Psoas muscle (tissue), 8 donors: ENCODE measurements at regions of chr2 and their contacts with region 1.

Region 1: DNA sequence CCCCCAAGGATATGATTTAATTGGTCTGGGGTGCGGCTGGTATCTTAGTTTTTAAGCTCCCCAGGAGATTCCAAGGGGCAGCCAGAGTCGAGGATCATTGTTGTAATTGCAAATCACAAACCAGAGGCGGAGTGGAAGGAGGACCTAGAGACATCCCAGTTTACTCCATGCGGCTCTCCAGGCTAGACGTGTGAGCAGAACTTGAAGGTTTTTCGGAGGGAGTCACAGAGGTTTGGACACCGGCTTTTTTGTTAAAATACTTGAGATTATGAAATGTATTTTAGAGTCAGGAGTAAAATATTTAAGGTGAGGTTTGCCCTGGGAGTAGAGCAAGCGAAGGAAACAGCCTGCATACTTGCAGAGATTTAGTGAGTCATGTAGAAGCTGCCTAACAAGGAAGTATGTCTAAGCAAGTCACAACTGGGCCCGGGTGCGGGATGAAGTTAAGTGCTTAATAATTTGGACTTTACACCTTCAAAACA is 39.5 kb downstream of the TGOLN2 start:
- DNase-seq: peak in 1 of 2 donors; percentile 1
- ATAC-seq: no peak
- H3K4me3 ChIP-seq: no peak overlapping the region
- H3K27ac ChIP-seq: no peak overlapping the region
- H3K4me1 ChIP-seq: peaks cover 4% of the 10 kb centered on the region
- H3K27me3 ChIP-seq: no peaks in the 10 kb centered on the region
- CTCF ChIP-seq: no peak

Region 2: GRCh38 chr2:84925724-84926376 is 362.4 kb before region 1 on chr2:
- intact Hi-C with region 1: loop called in 1 of 2 experiments (anchors 10 kb)
- DNase-seq: peak; percentile 96
- ATAC-seq: peak; percentile 84 to 94 (median 87)
- H3K4me3 ChIP-seq: peak overlapping the region; percentile 55
- H3K27ac ChIP-seq: no peak overlapping the region
- H3K4me1 ChIP-seq: no peaks in the 10 kb centered on the region
- H3K27me3 ChIP-seq: no peaks in the 10 kb centered on the region
- CTCF ChIP-seq: peak; percentile 94

Region 3: DNA sequence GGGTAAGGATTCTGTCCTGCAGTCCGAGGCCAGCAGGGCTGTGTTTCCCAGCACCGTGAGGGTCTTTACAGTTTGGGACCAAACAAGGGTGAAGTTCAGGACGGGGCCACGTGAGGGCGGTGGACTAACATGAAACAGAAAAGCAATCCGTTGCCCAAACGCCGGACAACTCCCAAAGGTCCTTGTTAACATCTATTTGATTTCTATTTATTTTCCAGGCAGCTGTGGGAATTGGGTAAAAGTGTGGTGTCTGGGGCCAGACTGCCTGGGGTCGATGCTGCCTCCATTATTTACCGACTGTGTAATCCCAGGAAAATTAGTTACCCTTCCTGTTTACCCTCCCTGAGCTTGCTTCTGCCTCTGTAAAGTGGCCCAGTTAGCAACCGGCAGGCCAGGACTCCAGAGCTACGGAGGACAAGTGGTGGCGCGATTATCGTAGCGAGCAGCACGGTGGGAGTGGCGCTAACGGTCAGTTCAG is 221.4 kb before region 1 on chr2:
- intact Hi-C with region 1: loop called (anchors 2 to 5 kb)
- DNase-seq: peak; percentile 78 to 85
- ATAC-seq: peak; percentile 67 to 92 (median 84)
- H3K4me3 ChIP-seq: peak overlapping the region; percentile 42
- H3K27ac ChIP-seq: no peak overlapping the region
- H3K4me1 ChIP-seq: no peaks in the 10 kb centered on the region
- H3K27me3 ChIP-seq: peaks cover 0 to 6% (median 0%) of the 10 kb centered on the region in 3 donors
- CTCF ChIP-seq: peak; percentile 87

Region 4: GRCh38 chr2:85377083-85377482 is 88.8 kb after region 1 on chr2:
- intact Hi-C with region 1: no loop called
- DNase-seq: peak in 1 of 2 donors; percentile 11
- ATAC-seq: no peak
- H3K4me3 ChIP-seq: no peak overlapping the region
- H3K27ac ChIP-seq: no peak overlapping the region
- H3K4me1 ChIP-seq: no peaks in the 10 kb centered on the region
- H3K27me3 ChIP-seq: no peaks in the 10 kb centered on the region
- CTCF ChIP-seq: no peak